Activated B cell treated with CpG ODN at 0.5 μM for 24 hours (primary cell): ENCODE measurements at regions of chr6 and their contacts with region 1.

Region 1: DNA sequence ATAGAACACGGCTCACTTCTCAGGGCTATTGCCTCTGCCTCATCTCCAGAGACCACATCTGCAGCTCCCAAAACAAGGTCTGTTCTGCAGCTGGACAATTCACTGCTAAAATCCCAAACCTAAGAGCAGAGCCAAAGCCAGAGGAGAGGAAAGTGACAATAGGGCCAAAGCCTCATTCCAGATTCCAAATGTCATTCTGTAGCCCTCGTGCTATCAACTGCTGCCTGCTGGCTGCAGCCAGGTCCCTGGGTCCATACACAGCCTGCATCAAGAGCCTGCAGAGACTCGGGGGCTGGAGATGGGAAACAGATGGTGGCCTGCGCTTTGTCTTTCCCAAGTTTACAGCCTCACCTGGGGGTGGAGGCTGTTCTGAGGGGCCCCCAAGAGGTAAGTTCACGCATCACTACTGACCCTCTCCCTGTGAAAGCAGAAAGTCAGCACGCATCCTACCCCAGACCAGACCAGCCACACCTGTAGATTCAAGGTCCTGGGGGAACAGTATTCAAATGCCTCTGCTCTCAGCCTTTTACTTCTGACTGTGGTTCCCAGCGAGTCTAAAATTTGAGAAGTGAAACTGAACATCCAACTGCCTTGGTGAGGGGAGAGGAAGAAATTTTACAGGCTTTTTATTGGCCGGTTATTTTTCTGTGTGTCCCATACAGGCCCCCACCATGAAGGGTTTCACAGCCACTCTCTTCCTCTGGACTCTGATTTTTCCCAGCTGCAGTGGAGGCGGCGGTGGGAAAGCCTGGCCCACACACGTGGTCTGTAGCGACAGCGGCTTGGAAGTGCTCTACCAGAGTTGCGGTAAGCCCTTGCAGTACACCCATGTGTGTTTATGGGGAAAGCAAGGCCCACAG is at the start of gene LY86:
- DNase-seq: peak; percentile 56
- ATAC-seq: peak; percentile 65
- H3K4me3 Mint-ChIP-seq: peak within 1 kb of the TSS; percentile 96
- H3K27ac Mint-ChIP-seq: peak within 1 kb of the TSS; percentile 98
- H3K4me1 Mint-ChIP-seq: peaks cover 95% of the 10 kb centered on the region
- H3K27me3 Mint-ChIP-seq: no peaks in the 10 kb centered on the region
- CTCF ChIP-seq: no peak
- total RNA-seq, gene LY86: 57.6 and 58.1 TPM in 2 replicates

Region 2: DNA sequence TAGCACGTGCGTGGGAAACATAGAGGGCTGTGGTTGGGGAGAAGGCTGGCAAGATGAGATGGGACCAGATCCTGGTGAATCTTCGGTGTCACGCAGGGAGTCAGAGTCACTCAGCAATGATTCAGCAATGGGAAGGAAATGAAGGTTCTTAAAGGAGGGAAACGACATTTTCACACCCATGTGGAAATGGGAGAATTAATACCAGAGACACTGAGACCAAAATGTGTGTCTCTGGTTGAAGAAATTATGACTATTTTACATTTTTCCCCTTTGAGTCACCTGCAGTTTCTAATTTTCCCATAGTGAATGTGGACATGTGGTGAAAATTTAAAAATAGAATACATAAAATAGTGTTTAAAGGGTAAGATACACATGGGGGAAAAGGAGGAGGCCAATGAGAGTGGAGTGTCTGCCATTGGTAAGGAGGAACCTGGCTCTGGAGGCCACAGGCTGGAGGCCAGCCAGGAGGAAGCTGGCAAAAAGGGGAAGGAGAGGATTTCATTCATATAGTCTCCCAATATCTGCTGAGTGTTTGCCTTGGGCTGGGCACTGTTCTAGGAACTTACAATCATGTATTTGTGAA is 599.1 kb before region 1 on chr6:
- CTCF ChIA-PET with region 1: no interaction called
- POLR2A ChIA-PET with region 1: no interaction called
- intact Hi-C with region 1: no loop called
- DNase-seq: no peak
- ATAC-seq: no peak
- H3K4me3 Mint-ChIP-seq: no peak overlapping the region
- H3K27ac Mint-ChIP-seq: no peak overlapping the region
- H3K4me1 Mint-ChIP-seq: peaks cover 2% of the 10 kb centered on the region
- H3K27me3 Mint-ChIP-seq: peaks cover 60% of the 10 kb centered on the region
- CTCF ChIP-seq: no peak

Region 3: GRCh38 chr6:6331946-6332601 is 256.2 kb before region 1 on chr6:
- CTCF ChIA-PET with region 1: no interaction called
- POLR2A ChIA-PET with region 1: interaction called, 8 read pairs
- intact Hi-C with region 1: loop called (anchors 1 kb)
- DNase-seq: no peak
- ATAC-seq: peak; percentile 72
- H3K4me3 Mint-ChIP-seq: peak overlapping the region; percentile 81
- H3K27ac Mint-ChIP-seq: peak overlapping the region; percentile 100
- H3K4me1 Mint-ChIP-seq: peaks cover 48% of the 10 kb centered on the region
- H3K27me3 Mint-ChIP-seq: no peaks in the 10 kb centered on the region
- CTCF ChIP-seq: no peak

Region 4: GRCh38 chr6:6556738-6557505 is 31.4 kb before region 1 on chr6:
- CTCF ChIA-PET with region 1: interaction called, 57 read pairs
- POLR2A ChIA-PET with region 1: interaction called, 4 read pairs
- intact Hi-C with region 1: loop called (anchors 1 kb)
- DNase-seq: peak; percentile 28
- ATAC-seq: peak; percentile 81
- H3K4me3 Mint-ChIP-seq: no peak overlapping the region
- H3K27ac Mint-ChIP-seq: no peak overlapping the region
- H3K4me1 Mint-ChIP-seq: peaks cover 3% of the 10 kb centered on the region
- H3K27me3 Mint-ChIP-seq: no peaks in the 10 kb centered on the region
- CTCF ChIP-seq: peak; percentile 83

Region 5: DNA sequence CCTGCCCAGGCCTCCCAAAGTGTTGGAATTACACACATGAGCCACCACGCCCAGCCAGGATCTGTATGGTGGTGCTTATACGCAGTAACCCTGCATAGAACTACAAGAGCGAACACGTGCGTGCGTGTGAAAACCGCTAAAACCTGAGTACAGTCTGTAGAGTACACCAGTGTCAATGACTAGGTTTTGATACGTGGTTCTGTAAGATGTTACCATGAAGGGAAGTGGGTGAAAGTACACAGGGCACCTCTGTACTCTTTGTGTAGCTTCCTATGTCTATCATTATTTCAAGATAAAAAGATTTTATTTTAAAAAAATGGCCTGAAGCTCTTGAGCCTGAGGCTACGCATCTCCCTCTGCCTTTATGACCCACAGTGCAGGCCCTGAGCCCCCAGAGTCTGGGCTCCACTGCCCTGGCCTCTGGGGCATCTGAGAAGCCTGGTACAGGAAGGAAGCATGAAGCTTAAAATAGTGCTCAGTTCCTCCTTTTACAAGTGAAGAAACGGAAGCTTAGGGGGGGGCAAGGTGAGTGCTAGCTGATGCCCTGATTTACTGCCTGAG is 21.8 kb after region 1 on chr6:
- CTCF ChIA-PET with region 1: interaction called, 11 read pairs
- POLR2A ChIA-PET with region 1: interaction called, 100 read pairs
- intact Hi-C with region 1: loop called (anchors 1 kb)
- DNase-seq: peak; percentile 48
- ATAC-seq: peak; percentile 93
- H3K4me3 Mint-ChIP-seq: peak overlapping the region; percentile 66
- H3K27ac Mint-ChIP-seq: peak overlapping the region; percentile 93
- H3K4me1 Mint-ChIP-seq: peaks cover 73% of the 10 kb centered on the region
- H3K27me3 Mint-ChIP-seq: no peaks in the 10 kb centered on the region
- CTCF ChIP-seq: no peak

Region 6: DNA sequence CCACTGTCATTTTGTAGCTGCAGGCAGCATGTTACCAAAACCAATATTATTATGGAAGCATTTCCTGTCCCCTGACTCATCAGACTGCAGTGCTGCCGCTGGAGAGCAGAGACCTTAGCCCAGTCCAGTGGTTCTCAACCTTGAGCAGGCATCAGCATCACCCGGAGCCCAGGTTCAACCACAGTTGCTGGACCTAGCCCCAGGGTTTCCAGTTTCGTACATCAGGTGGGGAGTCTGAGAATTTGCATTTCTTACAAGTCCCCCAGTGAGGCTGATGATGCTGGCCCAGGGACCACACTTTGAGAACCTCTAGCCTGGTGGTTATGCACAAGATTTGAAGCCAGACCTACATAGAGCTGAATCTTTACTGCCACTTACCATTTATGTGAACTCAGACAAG is 47.6 kb after region 1 on chr6:
- CTCF ChIA-PET with region 1: no interaction called
- POLR2A ChIA-PET with region 1: interaction called, 5 read pairs
- intact Hi-C with region 1: loop called (anchors 2 kb)
- DNase-seq: no peak
- ATAC-seq: no peak
- H3K4me3 Mint-ChIP-seq: no peak overlapping the region
- H3K27ac Mint-ChIP-seq: peak overlapping the region; percentile 16
- H3K4me1 Mint-ChIP-seq: peaks cover 27% of the 10 kb centered on the region
- H3K27me3 Mint-ChIP-seq: no peaks in the 10 kb centered on the region
- CTCF ChIP-seq: no peak

Region 7: DNA sequence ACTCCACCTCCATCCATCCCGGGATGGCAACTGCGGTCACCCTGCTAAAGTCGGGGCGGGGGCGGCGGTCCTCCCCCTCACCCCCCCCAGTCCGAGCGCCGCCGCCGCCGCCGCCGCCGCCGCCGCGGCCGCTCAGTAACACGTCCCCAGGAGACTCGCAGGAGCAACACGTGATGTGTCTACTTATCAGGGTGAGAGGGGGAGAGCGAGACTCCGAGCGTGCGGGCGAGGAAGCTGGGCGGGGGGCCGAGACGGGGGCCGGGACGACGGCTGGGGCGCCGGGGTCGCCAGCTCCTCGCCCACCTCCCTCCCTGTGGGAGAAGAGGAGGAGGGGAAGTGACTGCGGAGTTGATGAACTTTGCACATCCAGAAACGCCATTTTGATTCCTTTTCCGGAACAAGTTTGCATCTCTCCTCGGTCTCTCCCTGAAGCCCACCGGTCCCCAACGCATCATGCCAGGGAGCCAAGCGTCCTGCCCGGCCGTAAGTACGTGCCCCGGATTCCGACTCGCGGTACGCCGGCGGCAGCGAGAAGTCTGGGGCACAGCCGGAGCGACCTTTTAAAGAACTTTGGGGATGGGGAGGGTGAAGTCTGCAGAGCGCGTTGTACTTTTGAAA is 519.4 kb after region 1 on chr6 and contains the start of gene RREB1:
- CTCF ChIA-PET with region 1: no interaction called
- POLR2A ChIA-PET with region 1: no interaction called
- intact Hi-C with region 1: loop called (anchors 2 kb)
- DNase-seq: peak; percentile 61
- ATAC-seq: peak; percentile 64
- H3K4me3 Mint-ChIP-seq: peak within 1 kb of the TSS; percentile 95
- H3K27ac Mint-ChIP-seq: peak within 1 kb of the TSS; percentile 94
- H3K4me1 Mint-ChIP-seq: peaks cover 38% of the 10 kb centered on the region
- H3K27me3 Mint-ChIP-seq: no peaks in the 10 kb centered on the region
- CTCF ChIP-seq: no peak
- total RNA-seq, gene RREB1: 62.2 and 67.7 TPM in 2 replicates